Testis (tissue), 5 donors: ENCODE measurements at regions of chr3 and their contacts with region 1.

Region 1: GRCh38 chr3:183385698-183386613 is 42.5 kb downstream of the MCF2L2 start:
- DNase-seq: peak; percentile 74
- H3K4me3 ChIP-seq: no peak overlapping the region
- H3K27ac ChIP-seq: no peak overlapping the region
- H3K4me1 ChIP-seq: no peaks in the 10 kb centered on the region
- H3K27me3 ChIP-seq: no peaks in the 10 kb centered on the region
- CTCF ChIP-seq: peak; percentile 59 to 65 (median 64)
- POLR2A ChIP-seq: no peak

Region 2: DNA sequence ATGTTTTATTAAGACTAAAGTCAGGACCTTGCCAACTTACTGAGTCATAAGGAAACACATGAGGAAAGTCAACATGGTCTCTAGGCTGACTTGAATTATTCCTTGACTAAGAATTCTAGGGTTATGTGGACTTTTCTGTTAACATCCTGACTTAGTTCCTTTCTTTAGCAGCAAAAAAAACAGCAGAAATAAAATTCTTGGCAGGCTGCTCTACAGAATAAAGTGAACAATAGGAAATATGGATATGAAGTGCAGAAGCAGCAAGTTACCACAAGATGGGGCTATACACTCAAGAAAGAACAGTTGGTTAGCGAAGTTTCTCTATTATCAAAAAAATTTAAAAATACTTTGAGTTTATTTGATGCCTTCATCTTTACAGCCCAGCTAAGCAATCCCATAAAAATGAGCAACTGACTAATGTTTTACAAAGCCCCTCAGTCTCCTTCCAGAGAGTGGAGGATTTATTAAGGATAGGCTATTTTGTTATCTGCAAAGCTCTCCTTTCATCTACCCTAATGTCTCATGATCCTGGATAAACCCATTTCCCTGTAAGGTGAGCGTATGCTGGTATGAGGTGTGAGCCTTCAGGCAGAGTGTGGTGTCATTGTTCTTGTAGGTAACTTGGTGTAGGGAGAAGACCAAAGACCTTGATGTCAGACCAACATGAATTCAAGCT is 263.6 kb before region 1 on chr3:
- intact Hi-C with region 1: loop called (anchors 5 kb)
- DNase-seq: no peak
- H3K4me3 ChIP-seq: no peak overlapping the region
- H3K27ac ChIP-seq: no peak overlapping the region
- H3K4me1 ChIP-seq: no peaks in the 10 kb centered on the region
- H3K27me3 ChIP-seq: no peaks in the 10 kb centered on the region
- CTCF ChIP-seq: peak; percentile 66 to 86 (median 75)
- POLR2A ChIP-seq: no peak

Region 3: DNA sequence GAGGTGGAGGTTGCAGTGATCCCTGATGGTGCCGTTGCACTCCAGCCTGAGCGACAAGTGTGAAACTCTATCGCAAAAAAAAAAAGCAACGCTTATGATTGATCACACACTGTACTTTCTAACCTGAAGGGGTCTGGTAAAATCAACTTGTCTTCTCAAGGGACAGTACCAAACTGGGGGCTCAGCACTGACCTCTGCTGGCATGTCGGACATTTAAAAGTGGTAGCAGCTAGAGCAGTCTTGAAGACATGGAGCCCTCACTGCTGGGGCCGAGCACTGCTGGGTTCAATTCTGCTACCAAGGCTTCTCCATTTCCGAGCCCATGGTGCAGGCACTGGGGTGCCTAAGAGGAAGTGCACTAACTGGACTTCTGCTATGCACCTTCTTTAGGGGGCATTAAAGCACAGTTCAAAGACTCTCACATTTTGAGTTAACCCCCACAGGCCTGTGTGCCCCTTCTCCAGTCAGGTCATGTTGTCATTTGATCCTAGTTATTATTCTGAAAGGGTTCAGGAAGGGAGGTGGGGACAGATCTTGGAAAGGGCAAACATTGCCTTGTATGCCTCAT is 197.0 kb before region 1 on chr3:
- intact Hi-C with region 1: loop called (anchors 10 kb)
- DNase-seq: peak; percentile 34
- H3K4me3 ChIP-seq: no peak overlapping the region
- H3K27ac ChIP-seq: no peak overlapping the region
- H3K4me1 ChIP-seq: no peaks in the 10 kb centered on the region
- H3K27me3 ChIP-seq: no peaks in the 10 kb centered on the region
- CTCF ChIP-seq: no peak
- POLR2A ChIP-seq: no peak